Right lobe of liver (tissue), 6 donors: ENCODE measurements at regions of chr5 and their contacts with region 1.

Region 1: GRCh38 chr5:146052780-146053179 is 52.6 kb downstream of the PLAC8L1 start:
- DNase-seq: no peak
- ATAC-seq: peak in 1 of 4 donors; percentile 21
- H3K4me3 ChIP-seq: no peak overlapping the region
- H3K27ac ChIP-seq: no peak overlapping the region
- H3K4me1 ChIP-seq: peaks cover 0 to 1% (median 0%) of the 10 kb centered on the region in 4 donors
- H3K27me3 ChIP-seq: no peaks in the 10 kb centered on the region
- CTCF ChIP-seq: peak in 2 of 4 donors; percentile 15 to 20
- POLR2A ChIP-seq: no peak

Region 2: DNA sequence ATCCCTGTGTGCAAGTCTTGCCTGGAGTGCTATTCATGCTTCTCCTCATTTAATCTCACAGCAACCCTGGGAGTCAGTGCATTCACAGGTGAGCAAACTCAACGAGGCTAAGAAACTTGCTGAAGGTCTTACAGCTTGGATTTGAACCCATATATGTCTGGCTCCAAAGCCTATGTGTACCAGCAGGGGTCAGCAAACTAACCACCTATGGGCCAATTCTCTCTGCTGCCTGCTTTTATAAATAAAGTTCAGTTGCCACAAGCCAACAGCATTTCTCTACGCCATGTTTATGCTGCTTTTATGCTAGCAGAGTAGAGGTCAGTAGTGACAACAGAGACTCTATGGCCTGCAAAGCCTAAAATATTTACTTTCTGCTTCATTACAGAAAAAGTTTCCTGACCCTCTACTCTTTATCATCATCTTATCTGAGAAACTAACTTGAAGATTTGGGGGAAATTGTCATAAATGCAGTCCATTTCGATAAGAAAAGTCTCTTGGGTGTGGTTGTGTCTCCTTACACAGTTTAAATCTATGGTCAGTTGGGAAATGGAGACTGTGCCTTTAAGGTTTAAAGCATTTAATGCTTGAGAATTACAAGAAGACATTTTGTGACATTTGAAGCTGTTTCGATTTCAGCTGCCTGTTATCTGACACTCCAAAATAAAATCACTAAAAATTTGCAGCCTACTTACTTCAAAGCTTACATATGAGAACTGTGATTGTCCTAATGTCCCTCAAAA is 355.4 kb before region 1 on chr5:
- intact Hi-C with region 1: loop called in 1 of 2 experiments (anchors 10 kb)
- DNase-seq: no peak
- ATAC-seq: peak; percentile 67 to 77 (median 70)
- H3K4me3 ChIP-seq: no peak overlapping the region
- H3K27ac ChIP-seq: no peak overlapping the region
- H3K4me1 ChIP-seq: no peaks in the 10 kb centered on the region
- H3K27me3 ChIP-seq: no peaks in the 10 kb centered on the region
- CTCF ChIP-seq: peak; percentile 46 to 57 (median 50)
- POLR2A ChIP-seq: no peak

Region 3: GRCh38 chr5:145903113-145903512 is 149.7 kb before region 1 on chr5:
- intact Hi-C with region 1: loop called in 1 of 2 experiments (anchors 10 kb)
- DNase-seq: no peak
- ATAC-seq: no peak
- H3K4me3 ChIP-seq: no peak overlapping the region
- H3K27ac ChIP-seq: no peak overlapping the region
- H3K4me1 ChIP-seq: no peaks in the 10 kb centered on the region
- H3K27me3 ChIP-seq: no peaks in the 10 kb centered on the region
- CTCF ChIP-seq: peak in 1 of 4 donors; percentile 5
- POLR2A ChIP-seq: no peak